ENCODE measurements at regions of chr20 and their contacts with region 1.

Region 1: DNA sequence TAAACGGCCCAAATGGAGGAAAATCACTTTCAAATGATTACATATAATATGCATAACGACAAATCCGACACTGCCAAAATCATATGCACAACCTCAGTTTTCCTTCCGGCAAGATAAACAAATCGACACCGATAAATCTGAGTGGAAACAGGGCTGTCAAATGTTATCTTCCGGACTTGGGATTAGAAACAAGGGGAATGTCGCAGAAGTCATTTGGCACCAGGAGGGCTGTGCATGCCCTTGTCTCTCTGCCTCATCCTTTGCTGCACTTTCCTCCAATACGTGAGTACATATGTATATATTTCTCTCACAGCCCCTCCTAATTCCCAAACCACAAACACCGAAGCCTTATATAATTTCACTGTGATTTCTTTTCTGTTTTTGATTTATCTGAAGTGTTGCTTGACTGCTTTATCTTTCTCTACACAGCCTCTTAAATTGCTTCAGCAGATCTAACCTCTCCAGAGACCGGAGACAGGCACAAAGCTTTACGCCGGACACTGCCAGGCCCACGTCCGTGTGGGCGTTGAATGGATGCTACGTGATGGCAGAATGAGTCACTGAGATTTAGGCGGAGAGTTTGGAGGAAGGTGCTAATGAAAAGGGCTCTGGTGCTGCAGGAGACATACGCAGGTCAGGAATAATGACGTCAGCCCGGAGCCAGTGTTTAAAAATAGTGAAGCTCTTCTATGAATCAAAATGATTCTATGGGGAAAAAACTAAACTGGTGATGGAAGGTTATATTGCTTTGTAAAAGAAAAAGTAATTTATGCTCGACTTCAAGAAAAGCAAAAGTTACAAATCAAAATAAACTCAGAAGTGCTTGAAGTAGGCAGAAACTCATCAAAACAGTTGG is 21.0 kb upstream of the PRELID3B start:
- DNase-seq: peak; percentile 86

Region 2: DNA sequence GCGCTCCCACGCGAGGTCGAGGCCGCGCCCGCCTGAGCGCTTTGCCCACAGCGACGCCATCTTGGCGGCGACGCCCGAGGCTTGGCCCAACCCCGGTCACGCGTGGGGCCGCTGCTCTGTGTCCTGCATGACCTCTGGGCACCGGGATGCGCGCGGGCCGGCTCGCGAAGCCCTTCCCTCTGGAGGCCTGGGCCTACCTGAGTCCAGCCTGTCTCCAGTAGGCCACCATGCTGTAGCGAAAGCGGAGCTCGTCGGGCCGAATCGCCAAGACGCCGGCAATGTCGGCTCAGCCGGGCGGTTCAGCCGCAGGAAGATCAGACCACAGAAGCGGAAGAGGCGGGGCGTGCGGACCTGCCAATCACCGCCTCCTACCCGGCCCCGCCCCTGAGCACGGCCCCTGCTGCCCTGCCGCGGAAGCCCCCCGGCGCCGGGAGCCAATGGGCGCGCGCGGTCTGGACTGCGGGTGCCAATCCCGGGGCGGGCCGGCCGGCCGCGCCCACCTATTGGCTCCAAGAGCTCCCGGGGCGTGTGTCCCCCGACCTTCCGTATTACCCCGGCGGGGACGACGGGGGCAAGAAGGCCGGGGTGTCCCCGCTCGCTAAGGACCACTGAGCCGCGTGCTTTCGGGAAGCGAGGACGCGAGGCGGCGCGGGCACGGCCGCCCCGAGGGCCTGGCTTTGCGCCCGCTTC is 31.4 kb before region 1 on chr20 and contains the start of gene ATP5F1E:
- intact Hi-C with region 1: no loop called
- DNase-seq: peak; percentile 97
- total RNA-seq, gene ATP5F1E: 123 TPM

Region 3: GRCh38 chr20:59042796-59043660 is 20.6 kb before region 1 on chr20:
- intact Hi-C with region 1: no loop called
- DNase-seq: peak; percentile 97

Region 4: GRCh38 chr20:59403261-59403961 is 339.8 kb after region 1 on chr20:
- intact Hi-C with region 1: loop called (anchors 10 kb)
- DNase-seq: peak; percentile 79

Measured in cardiac septum (tissue), 1 donor.